ENCODE measurements at regions of chr13 and their contacts with region 1.

Region 1: GRCh38 chr13:41132512-41133152 is at the start of gene KBTBD6:
- DNase-seq: peak; percentile 94
- ATAC-seq: peak; percentile 97
- H3K4me3 ChIP-seq: peak within 1 kb of the TSS; percentile 68 to 99 (median 84)
- H3K4me3 Mint-ChIP-seq: peak within 1 kb of the TSS; percentile 99
- H3K27ac ChIP-seq: peak within 1 kb of the TSS; percentile 45 to 79
- H3K27ac Mint-ChIP-seq: peak within 1 kb of the TSS; percentile 95
- H3K4me1 ChIP-seq: peaks cover 24% of the 10 kb centered on the region in 2 donors
- H3K4me1 Mint-ChIP-seq: peaks cover 43% of the 10 kb centered on the region
- H3K27me3 ChIP-seq: no peaks in the 10 kb centered on the region
- H3K27me3 Mint-ChIP-seq: no peaks in the 10 kb centered on the region
- CTCF ChIP-seq: no peak
- total RNA-seq, gene KBTBD6: 8.5 and 8.8 TPM in 2 replicates

Region 2: DNA sequence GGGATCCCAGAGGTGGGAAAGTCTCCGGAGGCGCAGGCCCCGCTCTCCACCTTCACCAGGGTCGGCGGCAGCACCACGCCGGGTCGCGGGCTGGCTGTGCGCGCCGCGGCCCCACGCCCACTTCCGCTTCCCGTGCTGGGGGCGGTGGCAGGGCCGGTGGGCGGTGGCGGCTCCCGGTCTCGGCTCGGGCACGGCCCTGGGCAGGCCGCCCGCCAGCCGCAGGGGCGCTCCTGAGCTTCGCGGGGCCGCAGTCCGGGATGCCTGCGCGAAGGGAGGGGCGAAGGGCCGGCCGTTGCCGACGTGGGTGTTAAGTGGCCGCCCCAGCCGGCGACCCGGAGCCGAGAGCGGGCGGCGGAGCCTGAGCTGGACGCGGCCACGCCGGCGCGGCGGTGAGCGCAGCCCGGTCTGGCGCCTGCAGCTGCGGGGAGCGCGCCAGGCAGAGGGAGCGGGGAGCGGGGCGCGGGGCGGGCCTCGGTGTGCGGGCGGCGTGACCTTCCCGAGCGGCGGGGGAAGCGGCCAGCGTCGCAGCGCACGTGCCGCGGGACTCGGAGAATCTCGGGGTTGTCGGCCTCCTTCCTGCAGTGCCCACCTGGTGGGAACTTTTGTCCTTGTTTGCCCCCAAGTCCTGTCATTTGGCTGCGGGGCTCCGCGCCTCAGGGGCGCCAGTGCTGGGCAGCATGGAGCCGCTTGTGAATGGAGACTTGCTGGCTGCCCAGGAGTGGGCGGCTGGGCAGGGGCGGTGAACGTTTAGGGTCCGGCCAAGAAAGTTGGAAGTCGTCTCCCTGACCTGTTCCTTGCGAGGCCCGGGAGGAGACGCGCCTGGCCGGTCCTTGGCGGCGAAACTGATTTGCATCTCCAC is 343.1 kb before region 1 on chr13 and contains the start of gene SLC25A15:
- CTCF ChIA-PET with region 1: no interaction called
- POLR2A ChIA-PET with region 1: no interaction called
- intact Hi-C with region 1: loop called (anchors 5 kb)
- DNase-seq: peak; percentile 82
- ATAC-seq: peak; percentile 95
- H3K4me3 ChIP-seq: peak within 1 kb of the TSS; percentile 21 to 73 (median 69)
- H3K4me3 Mint-ChIP-seq: peak within 1 kb of the TSS; percentile 84
- H3K27ac ChIP-seq: peak within 1 kb of the TSS; percentile 29 to 57
- H3K27ac Mint-ChIP-seq: peak within 1 kb of the TSS; percentile 81
- H3K4me1 ChIP-seq: peaks cover 9 to 13% of the 10 kb centered on the region in 2 donors
- H3K4me1 Mint-ChIP-seq: peaks cover 10% of the 10 kb centered on the region
- H3K27me3 ChIP-seq: no peaks in the 10 kb centered on the region
- H3K27me3 Mint-ChIP-seq: no peaks in the 10 kb centered on the region
- CTCF ChIP-seq: peak; percentile 19
- total RNA-seq, gene SLC25A15: 3.8 and 4.5 TPM in 2 replicates

Region 3: DNA sequence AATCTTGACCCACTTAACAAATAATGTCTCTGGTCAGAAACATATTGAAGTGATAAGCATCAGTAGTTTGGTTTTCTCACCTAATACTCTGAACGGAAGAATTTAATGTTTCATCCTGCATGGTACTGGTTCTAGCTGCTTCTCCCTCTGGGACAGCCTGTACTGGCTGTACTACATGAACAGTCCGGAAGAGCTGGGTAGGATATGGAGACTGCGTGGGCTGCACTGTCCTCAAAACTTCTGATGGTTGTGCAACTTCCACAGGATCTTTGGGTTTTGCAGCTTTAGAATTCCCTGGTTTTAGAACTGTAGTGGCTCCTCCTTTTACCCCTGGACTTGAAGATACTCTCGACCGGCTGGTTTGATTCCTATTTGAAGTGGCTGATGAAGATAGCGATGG is 191.8 kb before region 1 on chr13:
- CTCF ChIA-PET with region 1: no interaction called
- POLR2A ChIA-PET with region 1: no interaction called
- intact Hi-C with region 1: no loop called
- DNase-seq: no peak
- ATAC-seq: no peak
- H3K4me3 ChIP-seq: no peak overlapping the region
- H3K4me3 Mint-ChIP-seq: no peak overlapping the region
- H3K27ac ChIP-seq: no peak overlapping the region
- H3K27ac Mint-ChIP-seq: no peak overlapping the region
- H3K4me1 ChIP-seq: no peaks in the 10 kb centered on the region
- H3K4me1 Mint-ChIP-seq: peaks cover 7% of the 10 kb centered on the region
- H3K27me3 ChIP-seq: no peaks in the 10 kb centered on the region
- H3K27me3 Mint-ChIP-seq: no peaks in the 10 kb centered on the region
- CTCF ChIP-seq: no peak

Region 4: DNA sequence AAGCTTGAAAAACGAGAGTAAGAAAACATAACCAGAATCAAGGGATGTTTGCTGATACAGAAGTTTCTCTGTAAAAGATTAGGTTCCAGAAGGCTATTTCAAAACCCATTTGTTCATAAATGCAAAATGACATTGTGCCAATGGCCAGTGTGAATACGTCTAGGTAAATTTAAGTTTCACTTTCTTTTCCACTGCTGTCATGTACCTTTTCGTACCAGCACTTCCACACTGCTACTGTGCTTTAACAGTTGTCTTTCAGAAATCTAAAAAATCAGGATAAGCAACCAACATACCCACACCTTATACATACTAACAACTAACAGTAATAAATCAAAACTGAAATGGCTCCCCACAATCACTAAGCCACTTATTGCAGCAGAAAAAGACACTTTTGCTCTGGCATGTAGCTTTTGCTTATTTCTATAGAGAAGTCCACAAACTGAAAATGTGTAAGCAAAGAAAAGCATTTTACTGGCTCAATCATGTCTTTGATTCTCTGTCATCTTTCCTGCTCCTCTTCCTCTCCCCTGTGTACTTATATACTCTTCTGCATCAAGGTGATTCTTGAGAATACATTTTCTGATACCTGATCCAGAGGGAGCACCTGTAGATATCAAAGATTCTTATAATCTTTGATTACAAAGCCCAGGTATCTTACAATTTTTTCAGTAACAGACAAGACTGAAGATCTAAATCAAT is 147.8 kb before region 1 on chr13:
- CTCF ChIA-PET with region 1: no interaction called
- POLR2A ChIA-PET with region 1: no interaction called
- intact Hi-C with region 1: no loop called
- DNase-seq: peak; percentile 70
- ATAC-seq: peak; percentile 44
- H3K4me3 ChIP-seq: peak overlapping the region; percentile 20 to 66 (median 44)
- H3K4me3 Mint-ChIP-seq: peak overlapping the region; percentile 85
- H3K27ac ChIP-seq: peak overlapping the region; percentile 94 to 97
- H3K27ac Mint-ChIP-seq: peak overlapping the region; percentile 90
- H3K4me1 ChIP-seq: peaks cover 57 to 58% of the 10 kb centered on the region in 2 donors
- H3K4me1 Mint-ChIP-seq: peaks cover 63% of the 10 kb centered on the region
- H3K27me3 ChIP-seq: no peaks in the 10 kb centered on the region
- H3K27me3 Mint-ChIP-seq: no peaks in the 10 kb centered on the region
- CTCF ChIP-seq: no peak

Region 5: DNA sequence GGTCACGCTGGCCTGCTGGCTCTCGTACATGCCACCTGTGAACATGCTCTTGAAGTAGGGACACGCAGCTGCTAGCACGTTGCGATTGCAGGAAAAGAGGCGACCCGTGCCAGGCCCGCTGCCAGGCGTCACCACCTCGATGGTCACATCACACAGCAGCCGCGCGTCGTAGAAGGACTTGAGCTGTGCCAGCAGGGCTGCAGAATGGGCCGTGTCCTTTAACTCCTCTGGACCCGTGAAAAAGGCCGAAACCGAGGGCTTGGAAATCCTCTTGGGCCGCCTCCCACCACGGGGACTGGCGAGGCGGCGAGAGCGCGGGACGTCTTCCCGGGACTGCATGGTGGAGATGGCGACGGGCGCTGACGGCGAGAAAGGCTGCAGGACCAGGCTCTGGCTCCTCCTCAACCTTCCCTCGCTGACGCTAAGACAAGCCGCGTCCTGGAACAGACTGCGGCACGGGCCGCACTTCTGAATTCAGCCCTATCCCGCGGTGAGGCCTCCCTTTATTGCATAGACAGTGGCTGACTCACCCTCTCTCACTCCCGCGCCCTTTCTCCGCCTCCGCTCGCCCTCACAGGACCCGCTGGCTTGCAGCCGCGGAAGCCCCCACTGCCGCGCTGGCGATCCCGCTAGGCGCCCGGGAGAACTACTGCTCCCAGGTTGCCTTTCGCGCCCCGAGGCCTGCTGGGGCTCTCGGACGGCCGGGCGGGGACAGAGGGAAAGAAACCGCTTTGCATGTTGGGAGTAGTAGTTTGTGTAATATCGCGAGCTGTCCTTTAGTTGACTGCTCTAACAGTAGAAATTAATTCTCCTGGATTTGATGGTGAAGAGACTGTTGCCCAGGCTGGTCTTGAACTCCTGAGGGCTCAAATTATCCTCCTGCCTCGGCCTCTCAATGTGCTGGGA is 61.5 kb after region 1 on chr13 and contains the start of gene KBTBD7:
- CTCF ChIA-PET with region 1: interaction called, 3 read pairs
- POLR2A ChIA-PET with region 1: interaction called, 9 read pairs
- intact Hi-C with region 1: loop called (anchors 1 kb)
- DNase-seq: peak; percentile 90
- ATAC-seq: peak; percentile 94
- H3K4me3 ChIP-seq: peak within 1 kb of the TSS; percentile 59 to 92 (median 88)
- H3K4me3 Mint-ChIP-seq: peak within 1 kb of the TSS; percentile 96
- H3K27ac ChIP-seq: peak within 1 kb of the TSS; percentile 32 to 63
- H3K27ac Mint-ChIP-seq: peak within 1 kb of the TSS; percentile 94
- H3K4me1 ChIP-seq: peaks cover 33 to 34% of the 10 kb centered on the region in 2 donors
- H3K4me1 Mint-ChIP-seq: peaks cover 45% of the 10 kb centered on the region
- H3K27me3 ChIP-seq: no peaks in the 10 kb centered on the region
- H3K27me3 Mint-ChIP-seq: no peaks in the 10 kb centered on the region
- CTCF ChIP-seq: no peak
- total RNA-seq, gene KBTBD7: 8.4 and 9.2 TPM in 2 replicates

Region 6: GRCh38 chr13:41222259-41222852 is 89.7 kb after region 1 on chr13:
- CTCF ChIA-PET with region 1: interaction called, 9 read pairs
- POLR2A ChIA-PET with region 1: no interaction called
- intact Hi-C with region 1: loop called (anchors 1 kb)
- DNase-seq: peak; percentile 78
- ATAC-seq: peak; percentile 99
- H3K4me3 ChIP-seq: no peak overlapping the region
- H3K4me3 Mint-ChIP-seq: no peak overlapping the region
- H3K27ac ChIP-seq: no peak overlapping the region
- H3K27ac Mint-ChIP-seq: no peak overlapping the region
- H3K4me1 ChIP-seq: peaks cover 0 to 6% of the 10 kb centered on the region in 2 donors
- H3K4me1 Mint-ChIP-seq: peaks cover 3% of the 10 kb centered on the region
- H3K27me3 ChIP-seq: no peaks in the 10 kb centered on the region
- H3K27me3 Mint-ChIP-seq: no peaks in the 10 kb centered on the region
- CTCF ChIP-seq: peak; percentile 85

Region 7: DNA sequence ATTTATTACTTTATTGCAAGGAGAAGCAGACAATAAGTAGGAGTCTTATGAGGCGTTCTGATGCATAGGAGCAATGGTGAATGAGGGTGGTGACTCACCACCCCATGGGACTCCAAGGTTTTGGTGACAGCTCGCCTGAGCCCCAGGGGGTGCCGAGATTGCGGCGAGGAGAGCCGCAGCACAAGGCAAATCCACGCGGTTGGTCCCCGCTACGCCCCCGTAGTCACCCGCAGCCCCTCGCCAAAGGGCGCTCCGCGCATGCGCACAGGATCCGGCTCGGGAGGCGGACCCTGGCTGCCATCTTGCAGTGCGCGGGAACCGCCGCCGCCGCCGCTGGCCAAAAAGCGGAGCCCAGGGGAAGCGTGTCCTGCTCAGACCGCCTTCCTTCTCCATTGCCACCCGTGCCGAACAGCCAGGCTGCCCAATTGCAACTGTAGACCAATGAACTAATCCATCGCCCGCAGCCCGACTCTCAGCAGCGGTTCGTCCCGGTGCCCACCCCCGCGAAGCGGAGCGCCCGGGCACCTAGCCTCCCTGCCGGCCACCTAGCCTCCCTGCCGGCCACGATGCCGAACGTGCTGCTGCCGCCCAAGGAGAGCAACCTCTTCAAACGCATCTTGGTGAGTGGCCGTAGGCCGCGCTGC is 178.5 kb after region 1 on chr13 and contains the start of gene NAA16:
- CTCF ChIA-PET with region 1: no interaction called
- POLR2A ChIA-PET with region 1: no interaction called
- intact Hi-C with region 1: loop called (anchors 1 kb)
- DNase-seq: peak; percentile 94
- ATAC-seq: peak; percentile 85
- H3K4me3 ChIP-seq: peak within 1 kb of the TSS; percentile 93 to 100 (median 99)
- H3K4me3 Mint-ChIP-seq: peak within 1 kb of the TSS; percentile 95
- H3K27ac ChIP-seq: peak within 1 kb of the TSS; percentile 80 to 83
- H3K27ac Mint-ChIP-seq: peak within 1 kb of the TSS; percentile 96
- H3K4me1 ChIP-seq: peaks cover 26 to 27% of the 10 kb centered on the region in 2 donors
- H3K4me1 Mint-ChIP-seq: peaks cover 39% of the 10 kb centered on the region
- H3K27me3 ChIP-seq: no peaks in the 10 kb centered on the region
- H3K27me3 Mint-ChIP-seq: no peaks in the 10 kb centered on the region
- CTCF ChIP-seq: no peak
- total RNA-seq, gene NAA16: 32.5 and 33.5 TPM in 2 replicates